ENCODE measurements at regions of chr16 and their contacts with region 1.

Region 1: GRCh38 chr16:28924732-28925385 is at the start of gene RABEP2:
- DNase-seq: peak; percentile 95 to 98
- ATAC-seq: peak; percentile 81 to 93 (median 85)
- H3K4me3 ChIP-seq: peak within 1 kb of the TSS; percentile 65
- H3K4me3 Mint-ChIP-seq: peak within 1 kb of the TSS; percentile 98
- H3K27ac ChIP-seq: peak within 1 kb of the TSS; percentile 96
- H3K27ac Mint-ChIP-seq: peak within 1 kb of the TSS; percentile 98 to 99
- H3K4me1 ChIP-seq: peaks cover 17% of the 10 kb centered on the region
- H3K4me1 Mint-ChIP-seq: peaks cover 26 to 34% of the 10 kb centered on the region in 2 donors
- H3K27me3 ChIP-seq: no peaks in the 10 kb centered on the region
- H3K27me3 Mint-ChIP-seq: no peaks in the 10 kb centered on the region
- CTCF ChIP-seq: no peak
- total RNA-seq, gene RABEP2: 53.4 to 63.4 (median 60.1) TPM

Region 2: GRCh38 chr16:28846080-28846932 is 78.6 kb before region 1 on chr16 and contains the start of gene TUFM:
- intact Hi-C with region 1: loop called (anchors 2 kb)
- DNase-seq: peak; percentile 97 to 99
- ATAC-seq: peak; percentile 96 to 99 (median 96)
- H3K4me3 ChIP-seq: peak within 1 kb of the TSS; percentile 98
- H3K4me3 Mint-ChIP-seq: peak within 1 kb of the TSS; percentile 97
- H3K27ac ChIP-seq: peak within 1 kb of the TSS; percentile 92
- H3K27ac Mint-ChIP-seq: peak within 1 kb of the TSS; percentile 95 to 99
- H3K4me1 ChIP-seq: peaks cover 30% of the 10 kb centered on the region
- H3K4me1 Mint-ChIP-seq: peaks cover 25 to 32% of the 10 kb centered on the region in 2 donors
- H3K27me3 ChIP-seq: no peaks in the 10 kb centered on the region
- H3K27me3 Mint-ChIP-seq: no peaks in the 10 kb centered on the region
- CTCF ChIP-seq: peak; percentile 71
- total RNA-seq, gene TUFM: 108 to 128 (median 118) TPM

Region 3: GRCh38 chr16:28910086-28911031 is 14.5 kb before region 1 on chr16:
- intact Hi-C with region 1: no loop called
- DNase-seq: no peak
- ATAC-seq: no peak
- H3K4me3 ChIP-seq: no peak overlapping the region
- H3K4me3 Mint-ChIP-seq: no peak overlapping the region
- H3K27ac ChIP-seq: no peak overlapping the region
- H3K27ac Mint-ChIP-seq: no peak overlapping the region
- H3K4me1 ChIP-seq: no peaks in the 10 kb centered on the region
- H3K4me1 Mint-ChIP-seq: no peaks in the 10 kb centered on the region
- H3K27me3 ChIP-seq: no peaks in the 10 kb centered on the region
- H3K27me3 Mint-ChIP-seq: no peaks in the 10 kb centered on the region
- CTCF ChIP-seq: no peak

Region 4: DNA sequence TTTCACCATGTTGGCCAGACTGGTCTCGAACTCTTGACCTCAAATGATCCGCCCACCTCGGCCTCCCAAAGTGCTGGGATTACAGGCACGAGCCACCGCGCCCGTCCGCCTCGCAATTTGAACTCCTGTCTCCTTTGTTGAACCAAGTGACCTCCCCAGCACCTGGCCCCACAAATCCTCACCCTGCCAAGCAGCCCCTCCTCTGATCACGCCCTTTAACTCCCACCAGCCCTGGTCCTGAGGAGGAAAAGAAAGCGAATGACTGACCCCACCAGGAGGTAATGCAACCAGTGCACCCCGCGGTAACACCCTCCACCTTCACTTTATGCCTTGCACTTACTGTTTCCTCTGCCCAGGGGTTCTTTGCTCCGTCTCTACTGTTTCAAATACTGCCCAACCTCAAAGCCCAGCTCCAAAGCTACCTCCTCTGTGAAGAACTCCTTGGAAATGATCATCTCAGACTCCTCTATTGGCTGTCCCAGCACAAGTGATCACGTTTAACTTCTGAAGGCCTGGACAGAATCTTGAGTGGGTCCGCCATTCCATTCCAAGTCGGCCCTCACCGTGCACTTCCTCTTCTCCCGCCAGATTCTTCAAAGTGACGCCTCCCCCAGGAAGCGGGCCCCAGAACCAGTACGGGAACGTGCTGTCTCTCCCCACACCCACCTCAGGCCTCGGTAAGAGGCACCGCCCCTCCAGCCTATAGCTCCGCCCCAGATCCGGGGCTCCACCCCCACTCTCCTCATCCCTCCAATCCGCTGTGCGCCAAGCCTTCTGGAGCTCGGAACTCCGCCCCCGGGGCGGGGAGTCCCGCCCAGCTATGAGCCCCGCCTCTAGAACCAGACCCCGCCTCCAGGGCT is 11.3 kb after region 1 on chr16:
- intact Hi-C with region 1: loop called (anchors 1 kb)
- DNase-seq: peak; percentile 84 to 91
- ATAC-seq: peak; percentile 100
- H3K4me3 ChIP-seq: peak overlapping the region; percentile 24
- H3K4me3 Mint-ChIP-seq: peak overlapping the region; percentile 78
- H3K27ac ChIP-seq: peak overlapping the region; percentile 10
- H3K27ac Mint-ChIP-seq: peak overlapping the region; percentile 25 to 78
- H3K4me1 ChIP-seq: peaks cover 29% of the 10 kb centered on the region
- H3K4me1 Mint-ChIP-seq: peaks cover 15 to 39% of the 10 kb centered on the region in 2 donors
- H3K27me3 ChIP-seq: no peaks in the 10 kb centered on the region
- H3K27me3 Mint-ChIP-seq: no peaks in the 10 kb centered on the region
- CTCF ChIP-seq: no peak

Region 5: DNA sequence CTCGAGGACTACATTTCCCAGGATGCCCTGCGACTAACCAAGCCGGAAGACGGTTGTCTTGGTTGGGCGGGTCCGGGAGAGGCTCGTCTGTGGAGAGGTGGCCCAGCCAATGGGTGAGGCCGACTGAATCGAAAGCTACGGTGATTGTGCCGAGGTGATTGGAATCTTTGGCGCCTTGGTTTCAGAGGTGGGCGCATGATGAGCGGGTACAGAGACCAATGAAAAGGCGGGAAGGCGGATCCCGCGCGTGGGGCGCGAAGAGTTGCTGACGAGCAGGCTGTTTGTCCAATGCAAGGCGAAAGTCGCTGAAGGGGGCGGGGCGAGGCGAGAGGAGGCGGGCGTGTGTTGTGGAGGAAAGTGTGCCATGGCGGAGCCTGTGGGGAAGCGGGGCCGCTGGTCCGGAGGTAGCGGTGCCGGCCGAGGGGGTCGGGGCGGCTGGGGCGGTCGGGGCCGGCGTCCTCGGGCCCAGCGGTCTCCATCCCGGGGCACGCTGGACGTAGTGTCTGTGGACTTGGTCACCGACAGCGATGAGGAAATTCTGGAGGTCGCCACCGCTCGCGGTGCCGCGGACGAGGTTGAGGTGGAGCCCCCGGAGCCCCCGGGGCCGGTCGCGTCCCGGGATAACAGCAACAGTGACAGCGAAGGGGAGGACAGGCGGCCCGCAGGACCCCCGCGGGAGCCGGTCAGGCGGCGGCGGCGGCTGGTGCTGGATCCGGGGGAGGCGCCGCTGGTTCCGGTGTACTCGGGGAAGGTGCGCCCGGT is 26.0 kb after region 1 on chr16 and contains the start of gene NFATC2IP:
- intact Hi-C with region 1: loop called (anchors 2 kb)
- DNase-seq: peak; percentile 99 to 100
- ATAC-seq: peak; percentile 92 to 98 (median 93)
- H3K4me3 ChIP-seq: peak within 1 kb of the TSS; percentile 79
- H3K4me3 Mint-ChIP-seq: peak within 1 kb of the TSS; percentile 89
- H3K27ac ChIP-seq: peak within 1 kb of the TSS; percentile 67
- H3K27ac Mint-ChIP-seq: peak within 1 kb of the TSS; percentile 82 to 96
- H3K4me1 ChIP-seq: peaks cover 29% of the 10 kb centered on the region
- H3K4me1 Mint-ChIP-seq: peaks cover 20 to 25% of the 10 kb centered on the region in 2 donors
- H3K27me3 ChIP-seq: no peaks in the 10 kb centered on the region
- H3K27me3 Mint-ChIP-seq: no peaks in the 10 kb centered on the region
- CTCF ChIP-seq: no peak
- total RNA-seq, gene NFATC2IP: 87.1 to 132 (median 108) TPM